ENCODE measurements at regions of chr11 and their contacts with region 1.

Region 1: GRCh38 chr11:110429731-110430266 is at the start of gene FDX1:
- DNase-seq: peak; percentile 23
- ATAC-seq: peak; percentile 92
- H3K4me3 ChIP-seq: peak within 1 kb of the TSS; percentile 67
- H3K27ac ChIP-seq: peak within 1 kb of the TSS; percentile 47
- H3K4me1 ChIP-seq: peaks cover 10% of the 10 kb centered on the region
- H3K27me3 ChIP-seq: no peaks in the 10 kb centered on the region
- CTCF ChIP-seq: peak; percentile 41 to 61 (median 42); a peak in 5 of 6 replicates
- EP300 ChIP-seq: no peak
- POLR2A ChIP-seq: peak; percentile 78
- RAD21 ChIP-seq: no peak
- polyA plus RNA-seq, gene FDX1: 3.9 to 9.6 TPM

Region 2: GRCh38 chr11:110092515-110093404 is 337.0 kb before region 1 on chr11 and contains the start of gene ZC3H12C:
- CTCF ChIA-PET with region 1: no interaction called
- POLR2A ChIA-PET with region 1: no interaction called
- RAD21 ChIA-PET with region 1: interaction called, 3 read pairs
- SMC1A ChIA-PET with region 1: no interaction called
- in situ Hi-C with region 1: no loop called
- intact Hi-C with region 1: loop called (anchors 10 kb)
- DNase-seq: no peak
- ATAC-seq: peak; percentile 60
- H3K4me3 ChIP-seq: peak within 1 kb of the TSS; percentile 72
- H3K27ac ChIP-seq: peak within 1 kb of the TSS; percentile 75
- H3K4me1 ChIP-seq: peaks cover 21% of the 10 kb centered on the region
- H3K27me3 ChIP-seq: no peaks in the 10 kb centered on the region
- CTCF ChIP-seq: peak; percentile 19 to 44 (median 40); a peak in 5 of 6 replicates
- EP300 ChIP-seq: peak; percentile 58 to 63; a peak in 2 of 4 replicates
- POLR2A ChIP-seq: peak; percentile 80
- RAD21 ChIP-seq: peak; percentile 49
- polyA plus RNA-seq, gene ZC3H12C: 0.31 to 0.68 TPM

Region 3: DNA sequence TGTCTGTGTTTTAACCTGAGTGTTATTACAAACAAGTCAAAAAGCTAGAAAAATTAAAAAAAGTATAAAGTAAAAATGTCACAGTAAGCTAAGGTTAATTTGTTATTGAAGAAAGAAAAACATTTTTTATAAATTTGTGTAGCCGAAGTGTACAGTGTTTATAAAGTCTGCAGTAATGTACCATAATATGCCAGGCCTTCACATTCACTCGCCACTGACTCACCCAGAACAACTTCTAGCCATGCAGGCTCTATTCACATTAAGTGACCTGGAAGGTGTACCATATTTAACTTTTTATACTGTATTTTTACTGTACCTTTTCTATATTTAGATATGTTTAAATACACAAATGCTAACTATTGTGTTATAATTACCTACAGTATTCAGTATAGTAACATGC is 14.7 kb before region 1 on chr11:
- CTCF ChIA-PET with region 1: interaction called, 6 read pairs
- POLR2A ChIA-PET with region 1: no interaction called
- RAD21 ChIA-PET with region 1: interaction called, 4 read pairs
- SMC1A ChIA-PET with region 1: interaction called, 14 read pairs
- in situ Hi-C with region 1: no loop called
- intact Hi-C with region 1: no loop called
- DNase-seq: no peak
- ATAC-seq: no peak
- H3K4me3 ChIP-seq: no peak overlapping the region
- H3K27ac ChIP-seq: no peak overlapping the region
- H3K4me1 ChIP-seq: no peaks in the 10 kb centered on the region
- H3K27me3 ChIP-seq: no peaks in the 10 kb centered on the region
- CTCF ChIP-seq: no peak
- EP300 ChIP-seq: no peak
- POLR2A ChIP-seq: no peak
- RAD21 ChIP-seq: no peak

Region 4: GRCh38 chr11:110447897-110448745 is 18.3 kb after region 1 on chr11:
- CTCF ChIA-PET with region 1: interaction called, 78 read pairs
- POLR2A ChIA-PET with region 1: interaction called, 9 read pairs
- RAD21 ChIA-PET with region 1: interaction called, 8 read pairs
- SMC1A ChIA-PET with region 1: interaction called, 22 read pairs
- in situ Hi-C with region 1: no loop called
- intact Hi-C with region 1: no loop called
- DNase-seq: no peak
- ATAC-seq: peak; percentile 65
- H3K4me3 ChIP-seq: no peak overlapping the region
- H3K27ac ChIP-seq: no peak overlapping the region
- H3K4me1 ChIP-seq: peaks cover 3% of the 10 kb centered on the region; the same call in 1 of the 2 replicates
- H3K27me3 ChIP-seq: no peaks in the 10 kb centered on the region
- CTCF ChIP-seq: peak; percentile 38 to 52 (median 49); a peak in 4 of 6 replicates
- EP300 ChIP-seq: no peak
- POLR2A ChIP-seq: no peak
- RAD21 ChIP-seq: peak; percentile 68

Region 5: GRCh38 chr11:110453684-110454354 is 24.0 kb after region 1 on chr11:
- CTCF ChIA-PET with region 1: interaction called, 21 read pairs
- POLR2A ChIA-PET with region 1: no interaction called
- RAD21 ChIA-PET with region 1: interaction called, 6 read pairs
- SMC1A ChIA-PET with region 1: interaction called, 10 read pairs
- in situ Hi-C with region 1: no loop called
- intact Hi-C with region 1: no loop called
- DNase-seq: no peak
- ATAC-seq: peak; percentile 97
- H3K4me3 ChIP-seq: no peak overlapping the region
- H3K27ac ChIP-seq: no peak overlapping the region
- H3K4me1 ChIP-seq: peaks cover 19% of the 10 kb centered on the region
- H3K27me3 ChIP-seq: no peaks in the 10 kb centered on the region
- CTCF ChIP-seq: no peak
- EP300 ChIP-seq: peak in 1 of 2 experiments; percentile 56; a peak in 2 of 4 replicates
- POLR2A ChIP-seq: no peak
- RAD21 ChIP-seq: no peak

Region 6: DNA sequence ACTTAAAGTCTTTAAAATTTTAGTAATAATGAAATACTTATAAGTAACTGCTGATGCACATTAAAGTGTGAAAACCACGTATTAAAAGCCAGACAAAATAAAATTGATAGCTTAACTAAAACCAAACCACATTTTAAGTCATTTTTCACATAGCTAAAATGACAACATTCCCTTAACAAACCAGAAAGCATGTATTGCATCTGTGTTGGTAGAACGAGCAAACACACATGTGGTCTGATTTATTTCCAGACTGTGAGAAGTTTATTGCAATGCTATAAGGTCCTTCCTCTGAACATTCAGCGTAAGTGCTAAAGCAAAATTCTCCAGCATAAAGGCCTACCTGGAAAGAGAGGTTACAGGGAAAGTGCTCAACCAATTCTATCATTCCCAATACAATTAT is 224.7 kb after region 1 on chr11:
- CTCF ChIA-PET with region 1: no interaction called
- POLR2A ChIA-PET with region 1: no interaction called
- RAD21 ChIA-PET with region 1: no interaction called
- SMC1A ChIA-PET with region 1: no interaction called
- in situ Hi-C with region 1: no loop called
- intact Hi-C with region 1: no loop called
- DNase-seq: no peak
- ATAC-seq: no peak
- H3K4me3 ChIP-seq: no peak overlapping the region
- H3K27ac ChIP-seq: no peak overlapping the region
- H3K4me1 ChIP-seq: no peaks in the 10 kb centered on the region
- H3K27me3 ChIP-seq: no peaks in the 10 kb centered on the region
- CTCF ChIP-seq: no peak
- EP300 ChIP-seq: no peak
- POLR2A ChIP-seq: no peak
- RAD21 ChIP-seq: no peak

Measured in GM12878 (cell line).